ENCODE measurements at regions of chr6 and their contacts with region 1.

Region 1: GRCh38 chr6:62479697-62480220 is 193.7 kb upstream of the KHDRBS2 start:
- DNase-seq: no peak
- H3K4me3 Mint-ChIP-seq: no peak overlapping the region
- H3K27ac Mint-ChIP-seq: no peak overlapping the region
- H3K4me1 Mint-ChIP-seq: no peaks in the 10 kb centered on the region
- H3K27me3 Mint-ChIP-seq: no peaks in the 10 kb centered on the region

Region 2: GRCh38 chr6:62192593-62192992 is 287.2 kb before region 1 on chr6:
- intact Hi-C with region 1: loop called (anchors 10 kb)
- DNase-seq: no peak
- H3K4me3 Mint-ChIP-seq: no peak overlapping the region
- H3K27ac Mint-ChIP-seq: no peak overlapping the region
- H3K4me1 Mint-ChIP-seq: no peaks in the 10 kb centered on the region
- H3K27me3 Mint-ChIP-seq: no peaks in the 10 kb centered on the region

Measured in activated T-helper 2 cell treated with anti-CD3 and anti-CD28 coated beads, Interferon-gamma antibody, Interleukin-2, Interleukin-4, amounts not matched to agents 10 μg/mL and 5 μg/mL and 100 μg/mL, durations not matched to agents 14 hours and 24 hours and 36 hours (primary cell).